Caco-2 (cell line): ENCODE measurements at regions of chr7 and their contacts with region 1.

Region 1: GRCh38 chr7:116271963-116272839 is 61.9 kb downstream of the TES start:
- DNase-seq: no peak
- H3K4me3 ChIP-seq: no peak overlapping the region
- H3K4me3 Mint-ChIP-seq: no peak overlapping the region
- H3K27ac Mint-ChIP-seq: no peak overlapping the region
- H3K4me1 ChIP-seq: peaks cover 39% of the 10 kb centered on the region
- H3K4me1 Mint-ChIP-seq: peaks cover 23% of the 10 kb centered on the region
- H3K27me3 ChIP-seq: no peaks in the 10 kb centered on the region
- H3K27me3 Mint-ChIP-seq: no peaks in the 10 kb centered on the region
- CTCF ChIP-seq: no peak

Region 2: GRCh38 chr7:116340943-116341907 is 69.0 kb after region 1 on chr7:
- CTCF ChIA-PET with region 1: no interaction called
- POLR2A ChIA-PET with region 1: no interaction called
- intact Hi-C with region 1: loop called (anchors 5 kb)
- DNase-seq: peak in 1 of 2 experiments; percentile 12
- H3K4me3 ChIP-seq: no peak overlapping the region
- H3K4me3 Mint-ChIP-seq: no peak overlapping the region
- H3K27ac Mint-ChIP-seq: no peak overlapping the region
- H3K4me1 ChIP-seq: peaks cover 16% of the 10 kb centered on the region
- H3K4me1 Mint-ChIP-seq: peaks cover 15% of the 10 kb centered on the region
- H3K27me3 ChIP-seq: no peaks in the 10 kb centered on the region
- H3K27me3 Mint-ChIP-seq: no peaks in the 10 kb centered on the region
- CTCF ChIP-seq: peak in 1 of 2 experiments; percentile 23